Activated CD4-positive, alpha-beta memory T cell treated with anti-CD3 and anti-CD28 coated beads, Interleukin-2, amount 10 ng/mL, durations not matched to agents 7 days and 5 days (primary cell): ENCODE measurements at regions of chr2 and their contacts with region 1.

Region 1: DNA sequence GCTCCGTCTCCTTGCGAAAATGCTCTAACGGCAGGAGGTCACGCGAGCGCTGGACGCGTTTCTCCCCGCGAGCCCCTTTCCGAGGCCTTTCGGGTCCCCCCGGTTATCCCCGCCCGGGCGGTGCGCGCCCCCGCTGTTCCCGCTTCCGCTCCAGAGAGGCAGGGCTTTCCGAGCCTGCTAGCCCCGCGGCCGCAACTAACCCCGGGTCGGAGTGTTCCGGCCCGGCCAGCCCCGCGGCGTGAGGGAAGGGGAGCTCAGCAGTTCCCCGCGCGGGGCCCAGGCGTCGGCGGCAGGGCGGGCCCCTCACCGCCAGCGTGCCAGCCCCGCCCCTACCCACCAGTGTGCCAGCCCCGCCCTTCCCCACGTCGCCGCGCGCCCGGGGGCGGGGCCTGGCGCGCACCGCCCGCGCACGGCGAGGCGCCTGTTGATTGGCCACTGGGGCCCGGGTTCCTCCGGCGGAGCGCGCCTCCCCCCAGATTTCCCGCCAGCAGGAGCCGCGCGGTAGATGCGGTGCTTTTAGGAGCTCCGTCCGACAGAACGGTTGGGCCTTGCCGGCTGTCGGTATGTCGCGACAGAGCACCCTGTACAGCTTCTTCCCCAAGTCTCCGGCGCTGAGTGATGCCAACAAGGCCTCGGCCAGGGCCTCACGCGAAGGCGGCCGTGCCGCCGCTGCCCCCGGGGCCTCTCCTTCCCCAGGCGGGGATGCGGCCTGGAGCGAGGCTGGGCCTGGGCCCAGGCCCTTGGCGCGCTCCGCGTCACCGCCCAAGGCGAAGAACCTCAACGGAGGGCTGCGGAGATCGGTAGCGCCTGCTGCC is at the start of gene MSH6:
- DNase-seq: peak; percentile 91
- H3K4me3 Mint-ChIP-seq: peak within 1 kb of the TSS; percentile 88
- H3K27ac Mint-ChIP-seq: peak within 1 kb of the TSS; percentile 85
- H3K4me1 Mint-ChIP-seq: peaks cover 22% of the 10 kb centered on the region
- H3K27me3 Mint-ChIP-seq: no peaks in the 10 kb centered on the region
- total RNA-seq, gene MSH6: 77.4 to 84.1 TPM

Region 2: GRCh38 chr2:47402805-47403608 is 379.9 kb before region 1 on chr2 and contains the start of gene MSH2:
- CTCF ChIA-PET with region 1: interaction called, 5 read pairs
- POLR2A ChIA-PET with region 1: interaction called, 13 read pairs
- DNase-seq: peak; percentile 93
- H3K4me3 Mint-ChIP-seq: peak within 1 kb of the TSS; percentile 94
- H3K27ac Mint-ChIP-seq: peak within 1 kb of the TSS; percentile 82
- H3K4me1 Mint-ChIP-seq: peaks cover 39% of the 10 kb centered on the region
- H3K27me3 Mint-ChIP-seq: no peaks in the 10 kb centered on the region
- total RNA-seq, gene MSH2: 39.0 to 39.3 TPM

Region 3: GRCh38 chr2:47520825-47521665 is 261.8 kb before region 1 on chr2:
- CTCF ChIA-PET with region 1: no interaction called
- POLR2A ChIA-PET with region 1: interaction called, 10 read pairs
- DNase-seq: peak; percentile 85
- H3K4me3 Mint-ChIP-seq: peak overlapping the region; percentile 84
- H3K27ac Mint-ChIP-seq: peak overlapping the region; percentile 93
- H3K4me1 Mint-ChIP-seq: peaks cover 34% of the 10 kb centered on the region
- H3K27me3 Mint-ChIP-seq: no peaks in the 10 kb centered on the region

Region 4: GRCh38 chr2:47751875-47752357 is 31.0 kb before region 1 on chr2:
- CTCF ChIA-PET with region 1: no interaction called
- POLR2A ChIA-PET with region 1: interaction called, 10 read pairs
- DNase-seq: no peak
- H3K4me3 Mint-ChIP-seq: peak overlapping the region; percentile 34
- H3K27ac Mint-ChIP-seq: peak overlapping the region; percentile 81
- H3K4me1 Mint-ChIP-seq: peaks cover 15% of the 10 kb centered on the region
- H3K27me3 Mint-ChIP-seq: no peaks in the 10 kb centered on the region

Region 5: DNA sequence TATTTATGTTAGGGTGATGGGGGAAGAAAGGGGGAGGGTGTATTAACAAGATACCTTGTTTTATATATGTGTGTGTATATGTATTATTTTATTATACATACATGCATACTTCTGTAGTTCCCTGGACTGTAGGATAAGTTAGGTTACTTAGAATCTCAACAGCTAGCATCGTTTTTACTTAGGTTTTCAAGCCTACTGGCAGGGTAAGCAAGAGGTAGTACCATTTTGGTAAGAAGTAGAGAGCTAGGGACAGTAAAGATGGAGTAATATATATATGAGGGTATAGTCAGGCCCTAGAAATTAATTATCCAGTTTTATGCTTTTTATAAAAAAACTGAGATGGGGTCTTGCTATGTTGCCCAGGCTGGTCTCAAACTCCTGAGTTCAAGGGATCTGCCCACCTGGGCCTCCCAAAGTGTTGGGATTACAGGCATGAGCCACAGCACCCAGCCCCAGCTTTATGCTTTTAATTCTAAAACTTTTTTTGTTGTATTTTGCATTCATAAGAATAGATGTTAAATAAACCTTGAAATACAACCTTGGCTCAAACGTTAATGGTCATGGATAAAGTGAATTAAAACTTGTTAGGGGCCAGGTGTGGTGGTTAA is 13.3 kb after region 1 on chr2:
- CTCF ChIA-PET with region 1: no interaction called
- POLR2A ChIA-PET with region 1: interaction called, 24 read pairs
- DNase-seq: no peak
- H3K4me3 Mint-ChIP-seq: no peak overlapping the region
- H3K27ac Mint-ChIP-seq: no peak overlapping the region
- H3K4me1 Mint-ChIP-seq: peaks cover 2% of the 10 kb centered on the region
- H3K27me3 Mint-ChIP-seq: no peaks in the 10 kb centered on the region

Region 6: GRCh38 chr2:47906157-47907038 is 123.5 kb after region 1 on chr2 and contains the start of gene FBXO11:
- CTCF ChIA-PET with region 1: interaction called, 4 read pairs
- POLR2A ChIA-PET with region 1: interaction called, 21 read pairs
- DNase-seq: peak; percentile 98
- H3K4me3 Mint-ChIP-seq: peak within 1 kb of the TSS; percentile 83
- H3K27ac Mint-ChIP-seq: peak within 1 kb of the TSS; percentile 95
- H3K4me1 Mint-ChIP-seq: peaks cover 44% of the 10 kb centered on the region
- H3K27me3 Mint-ChIP-seq: no peaks in the 10 kb centered on the region
- total RNA-seq, gene FBXO11: 59.4 to 59.7 TPM

Region 7: DNA sequence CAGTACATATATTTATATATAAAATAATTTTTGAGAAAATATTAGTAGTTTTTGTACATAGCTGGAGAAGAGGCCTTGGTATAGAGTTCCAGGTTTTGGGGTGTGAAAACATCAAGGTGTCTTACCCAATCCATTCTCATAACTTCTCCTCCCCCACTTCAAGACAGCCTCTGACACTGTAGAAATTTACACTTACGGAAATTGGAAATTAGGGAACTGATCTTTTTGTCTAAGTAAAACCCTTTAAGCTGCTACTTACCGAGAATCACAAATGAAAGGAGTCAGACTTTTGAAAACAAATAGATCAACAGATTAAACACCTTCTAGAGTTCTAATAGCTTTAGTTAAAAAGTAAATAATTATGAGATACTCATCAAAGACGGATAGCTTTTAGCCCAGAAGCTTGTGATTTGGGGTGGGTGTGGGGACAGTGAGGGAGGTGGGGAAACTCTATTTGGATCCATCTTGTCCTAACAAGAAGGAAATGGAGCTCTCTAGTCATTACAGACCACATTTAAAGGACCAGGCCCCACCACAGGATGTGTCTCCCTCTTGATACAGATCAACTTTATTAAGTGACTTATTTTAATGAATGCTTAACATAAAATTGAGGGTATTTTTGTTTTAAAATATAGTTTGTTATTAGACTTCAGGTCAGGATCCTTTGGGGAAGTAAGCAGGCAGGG is 134.5 kb after region 1 on chr2:
- CTCF ChIA-PET with region 1: no interaction called
- POLR2A ChIA-PET with region 1: no interaction called
- DNase-seq: no peak
- H3K4me3 Mint-ChIP-seq: no peak overlapping the region
- H3K27ac Mint-ChIP-seq: no peak overlapping the region
- H3K4me1 Mint-ChIP-seq: no peaks in the 10 kb centered on the region
- H3K27me3 Mint-ChIP-seq: no peaks in the 10 kb centered on the region

Region 8: GRCh38 chr2:48448274-48449061 is 665.6 kb after region 1 on chr2:
- CTCF ChIA-PET with region 1: no interaction called
- POLR2A ChIA-PET with region 1: interaction called, 11 read pairs
- DNase-seq: no peak
- H3K4me3 Mint-ChIP-seq: peak overlapping the region; percentile 70
- H3K27ac Mint-ChIP-seq: peak overlapping the region; percentile 99
- H3K4me1 Mint-ChIP-seq: peaks cover 58% of the 10 kb centered on the region
- H3K27me3 Mint-ChIP-seq: no peaks in the 10 kb centered on the region